Common myeloid progenitor, CD34-positive (primary cell): ENCODE measurements at regions of chr1 and their contacts with region 1.

Region 1: GRCh38 chr1:109773146-109773899 is 9.6 kb upstream of the EPS8L3 start:
- DNase-seq: peak; percentile 81 to 91 (median 90)
- H3K4me3 ChIP-seq: no peak overlapping the region
- H3K27ac ChIP-seq: no peak overlapping the region
- H3K4me1 ChIP-seq: peaks cover 0 to 9% (median 5%) of the 10 kb centered on the region in 4 experiments
- H3K27me3 ChIP-seq: no peaks in the 10 kb centered on the region

Region 2: DNA sequence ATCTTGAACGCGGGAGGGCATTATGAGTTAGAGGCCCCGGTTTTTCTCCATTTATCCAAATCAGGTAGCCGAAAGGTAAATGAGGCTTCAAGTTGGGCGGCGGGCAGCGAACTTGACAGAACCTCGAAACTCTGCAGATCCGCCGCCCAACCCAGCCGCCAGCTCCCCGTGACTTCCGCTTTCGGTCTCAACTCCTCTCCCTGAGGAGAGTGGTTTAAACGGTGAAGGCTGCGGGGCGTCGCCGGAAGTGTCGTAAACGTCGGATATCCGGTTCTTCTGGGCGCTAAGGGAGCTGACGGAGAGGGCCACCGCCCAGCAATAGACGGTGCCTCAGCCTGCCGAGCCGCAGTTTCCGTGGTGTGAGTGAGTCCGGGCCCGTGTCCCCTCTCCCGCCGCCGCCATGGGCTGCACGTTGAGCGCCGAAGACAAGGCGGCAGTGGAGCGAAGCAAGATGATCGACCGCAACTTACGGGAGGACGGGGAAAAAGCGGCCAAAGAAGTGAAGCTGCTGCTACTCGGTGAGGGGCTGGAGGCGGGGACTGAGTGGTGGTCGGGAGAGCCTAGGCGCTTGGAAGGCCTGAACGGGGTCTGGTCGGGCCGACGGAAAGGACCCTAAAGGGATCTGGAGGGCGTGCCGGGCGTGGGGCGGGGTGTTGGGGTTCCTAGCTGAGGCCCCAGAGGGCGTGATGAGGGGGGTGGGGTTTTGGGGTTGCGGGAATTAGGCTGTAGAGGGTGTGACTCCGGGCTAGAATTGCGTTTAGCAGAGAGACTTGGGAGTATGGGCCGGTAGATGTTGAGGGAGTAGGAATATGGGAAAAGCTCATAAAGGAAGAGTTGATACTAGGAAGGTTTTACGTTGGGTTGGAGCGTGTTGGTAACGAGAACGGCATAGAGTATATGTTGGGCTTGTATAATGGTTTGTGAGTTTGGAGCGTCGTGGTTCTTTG is 224.7 kb before region 1 on chr1 and contains the start of gene GNAI3:
- CTCF ChIA-PET with region 1: interaction called, 121 read pairs
- POLR2A ChIA-PET with region 1: no interaction called
- DNase-seq: peak; percentile 98 to 99 (median 99)
- H3K4me3 ChIP-seq: peak within 1 kb of the TSS; percentile 96 to 99 (median 98)
- H3K27ac ChIP-seq: peak within 1 kb of the TSS; percentile 95 to 98
- H3K4me1 ChIP-seq: peaks cover 21 to 35% (median 32%) of the 10 kb centered on the region in 4 experiments
- H3K27me3 ChIP-seq: no peaks in the 10 kb centered on the region

Region 3: GRCh38 chr1:109655601-109656519 is 117.5 kb before region 1 on chr1 and contains the start of gene GSTM4:
- CTCF ChIA-PET with region 1: interaction called, 100 read pairs
- POLR2A ChIA-PET with region 1: no interaction called
- DNase-seq: peak; percentile 53 to 68 (median 57)
- H3K4me3 ChIP-seq: peak within 1 kb of the TSS; percentile 69 to 93 (median 84)
- H3K27ac ChIP-seq: peak within 1 kb of the TSS in 1 of 2 experiments; percentile 47
- H3K4me1 ChIP-seq: peaks cover 3 to 36% (median 26%) of the 10 kb centered on the region in 4 experiments
- H3K27me3 ChIP-seq: peaks cover 0 to 2% (median 0%) of the 10 kb centered on the region in 5 experiments

Region 4: GRCh38 chr1:109790735-109791494 is 17.6 kb after region 1 on chr1:
- CTCF ChIA-PET with region 1: interaction called, 152 read pairs
- POLR2A ChIA-PET with region 1: no interaction called
- DNase-seq: peak; percentile 94 to 99 (median 98)
- H3K4me3 ChIP-seq: peak overlapping the region in 3 of 7 experiments; percentile 23 to 43 (median 31)
- H3K27ac ChIP-seq: peak overlapping the region; percentile 64 to 95
- H3K4me1 ChIP-seq: peaks cover 23 to 93% (median 83%) of the 10 kb centered on the region in 4 experiments
- H3K27me3 ChIP-seq: no peaks in the 10 kb centered on the region

Region 5: GRCh38 chr1:109906160-109906838 is 133.0 kb after region 1 on chr1:
- CTCF ChIA-PET with region 1: interaction called, 11 read pairs
- POLR2A ChIA-PET with region 1: no interaction called
- DNase-seq: peak; percentile 14 to 53 (median 41)
- H3K4me3 ChIP-seq: no peak overlapping the region
- H3K27ac ChIP-seq: no peak overlapping the region
- H3K4me1 ChIP-seq: peaks cover 2 to 13% (median 11%) of the 10 kb centered on the region in 4 experiments
- H3K27me3 ChIP-seq: peaks cover 0 to 20% (median 9%) of the 10 kb centered on the region in 5 experiments

Region 6: GRCh38 chr1:110003747-110004630 is 230.7 kb after region 1 on chr1:
- CTCF ChIA-PET with region 1: interaction called, 33 read pairs
- POLR2A ChIA-PET with region 1: no interaction called
- DNase-seq: peak; percentile 26 to 74 (median 62)
- H3K4me3 ChIP-seq: no peak overlapping the region
- H3K27ac ChIP-seq: peak overlapping the region; percentile 22 to 50
- H3K4me1 ChIP-seq: peaks cover 0 to 17% (median 10%) of the 10 kb centered on the region in 4 experiments
- H3K27me3 ChIP-seq: no peaks in the 10 kb centered on the region